ENCODE measurements at regions of chr2 and their contacts with region 1.

Region 1: GRCh38 chr2:24792874-24793760 is at the starts of genes CENPO and PTRHD1:
- DNase-seq: peak; percentile 97
- ATAC-seq: peak; percentile 98
- H3K4me3 Mint-ChIP-seq: peak within 1 kb of the TSS; percentile 97
- H3K27ac Mint-ChIP-seq: peak within 1 kb of the TSS; percentile 100
- H3K4me1 Mint-ChIP-seq: peaks cover 30% of the 10 kb centered on the region
- H3K27me3 Mint-ChIP-seq: no peaks in the 10 kb centered on the region
- total RNA-seq, gene CENPO: 42.4 to 42.7 TPM
- total RNA-seq, gene PTRHD1: 22.3 to 26.5 TPM

Region 2: GRCh38 chr2:23926750-23927571 is 866.2 kb before region 1 on chr2 and contains the start of gene ATAD2B:
- CTCF ChIA-PET with region 1: no interaction called
- POLR2A ChIA-PET with region 1: no interaction called
- intact Hi-C with region 1: loop called in 1 of 2 experiments (anchors 2 kb)
- DNase-seq: peak; percentile 96
- ATAC-seq: peak; percentile 80
- H3K4me3 Mint-ChIP-seq: peak within 1 kb of the TSS; percentile 80
- H3K27ac Mint-ChIP-seq: peak within 1 kb of the TSS; percentile 100
- H3K4me1 Mint-ChIP-seq: peaks cover 41% of the 10 kb centered on the region
- H3K27me3 Mint-ChIP-seq: no peaks in the 10 kb centered on the region
- total RNA-seq, gene ATAD2B: 10.9 to 12.7 TPM

Region 3: DNA sequence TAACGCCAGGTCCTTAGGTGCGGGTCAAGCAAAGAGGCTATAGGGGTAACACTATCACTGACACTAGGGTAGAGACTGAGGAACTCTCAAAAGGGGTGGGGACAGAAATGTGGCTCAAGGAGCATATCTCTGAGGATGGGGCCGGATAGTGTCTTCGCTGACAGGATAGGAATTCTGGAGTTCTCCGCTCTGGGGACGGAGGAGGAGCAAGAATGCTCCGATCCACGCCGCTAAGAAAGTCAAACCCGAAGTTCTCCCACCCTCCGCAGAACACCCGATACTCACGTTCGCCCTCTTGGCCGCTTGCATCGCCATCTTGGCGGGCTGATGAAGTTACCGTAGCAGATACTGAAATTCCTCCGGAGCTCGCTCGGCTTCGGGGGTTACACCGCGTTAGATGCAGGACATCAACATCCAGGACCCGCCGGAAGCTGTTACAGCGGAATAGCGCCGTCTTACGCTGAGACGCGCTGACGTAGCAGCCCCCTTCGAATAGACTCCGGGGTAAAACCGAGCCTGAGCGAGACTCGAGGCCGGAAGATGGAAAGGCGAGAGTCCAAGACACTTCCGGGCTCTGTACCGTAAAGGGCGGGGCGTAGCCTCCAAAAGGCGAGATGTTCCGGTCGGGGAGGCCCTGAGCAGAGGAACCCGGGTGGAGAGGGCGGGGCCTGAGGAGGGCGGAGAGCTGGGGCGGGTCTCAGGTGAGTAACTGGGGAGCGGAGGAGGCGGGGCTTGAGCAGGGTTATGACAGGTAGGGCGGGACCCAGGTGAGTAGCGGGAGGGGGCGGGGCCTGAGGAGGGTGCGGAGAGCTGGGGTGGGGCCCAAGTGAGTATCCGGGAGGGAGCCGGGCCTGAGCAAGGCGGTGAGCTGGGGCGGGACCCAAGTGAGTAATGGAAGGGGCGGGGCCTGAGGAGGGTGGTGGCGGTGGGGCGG is 716.9 kb before region 1 on chr2 and contains the start of gene SF3B6:
- CTCF ChIA-PET with region 1: no interaction called
- POLR2A ChIA-PET with region 1: no interaction called
- intact Hi-C with region 1: loop called in 1 of 2 experiments (anchors 1 kb)
- DNase-seq: peak; percentile 100
- ATAC-seq: peak; percentile 91
- H3K4me3 Mint-ChIP-seq: peak within 1 kb of the TSS; percentile 99
- H3K27ac Mint-ChIP-seq: peak within 1 kb of the TSS; percentile 99
- H3K4me1 Mint-ChIP-seq: peaks cover 43% of the 10 kb centered on the region
- H3K27me3 Mint-ChIP-seq: no peaks in the 10 kb centered on the region
- total RNA-seq, gene SF3B6: 128 to 143 TPM

Region 4: DNA sequence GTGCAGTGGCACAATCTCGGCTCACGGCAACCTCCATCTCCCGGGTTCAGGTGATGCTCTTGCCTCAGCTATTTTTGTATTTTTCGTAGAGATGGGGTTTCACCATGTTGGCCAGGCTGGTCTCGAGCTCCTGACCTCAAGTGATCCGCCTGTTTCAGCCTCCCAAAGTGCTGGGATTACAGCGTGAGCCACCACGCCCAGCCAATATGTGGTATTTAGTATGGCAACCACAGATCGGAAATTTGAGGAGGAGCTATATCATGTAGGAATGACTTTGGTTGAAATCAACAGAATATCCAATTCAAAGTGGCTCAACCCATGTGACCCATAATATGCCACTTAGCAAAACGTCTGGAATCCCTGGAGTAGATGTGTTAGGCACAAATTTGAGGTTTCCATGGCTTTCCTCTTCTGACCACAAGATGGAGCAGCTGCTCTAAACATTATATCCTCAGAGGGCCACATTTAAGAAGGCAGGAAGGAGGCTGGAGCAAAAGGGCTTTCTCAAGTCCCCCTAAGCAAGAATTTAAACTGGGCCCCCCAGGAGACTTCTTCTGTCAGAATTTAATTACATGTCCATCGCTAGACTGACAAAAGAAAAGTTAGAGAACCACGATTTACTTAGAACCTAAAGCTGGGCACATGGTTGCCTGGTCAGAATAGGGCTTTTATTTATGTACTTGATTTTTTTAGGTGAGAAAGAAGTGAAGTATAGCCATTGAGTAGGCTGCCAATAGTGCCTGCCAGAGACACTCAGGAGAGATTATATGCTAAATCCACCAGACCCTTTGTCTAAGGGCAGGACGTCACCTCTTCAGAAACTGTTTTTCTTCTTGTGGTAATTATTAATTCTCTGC is 383.2 kb before region 1 on chr2:
- CTCF ChIA-PET with region 1: interaction called, 20 read pairs
- POLR2A ChIA-PET with region 1: no interaction called
- intact Hi-C with region 1: no loop called
- DNase-seq: peak; percentile 37
- ATAC-seq: peak; percentile 86
- H3K4me3 Mint-ChIP-seq: no peak overlapping the region
- H3K27ac Mint-ChIP-seq: no peak overlapping the region
- H3K4me1 Mint-ChIP-seq: no peaks in the 10 kb centered on the region
- H3K27me3 Mint-ChIP-seq: peaks cover 7% of the 10 kb centered on the region

Region 5: DNA sequence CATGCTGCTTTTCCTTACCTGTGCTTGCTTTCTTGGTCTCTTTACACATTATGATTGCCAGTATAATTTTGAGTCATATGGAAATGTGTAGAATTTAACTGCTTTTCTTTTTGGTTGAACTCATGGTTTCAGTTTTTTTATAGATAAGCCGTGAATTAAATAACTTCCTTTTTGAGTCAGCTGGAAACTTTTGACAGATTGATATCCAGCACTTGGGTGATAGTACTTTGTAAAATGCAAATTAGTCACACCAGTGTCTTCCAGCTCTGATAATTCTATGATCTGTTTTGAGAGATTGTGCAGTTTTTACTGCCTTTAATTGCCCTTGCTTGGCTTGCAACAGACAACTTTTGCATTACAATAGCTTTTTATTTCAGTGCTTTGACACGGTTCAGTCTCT is 215.6 kb before region 1 on chr2:
- CTCF ChIA-PET with region 1: interaction called, 4 read pairs
- POLR2A ChIA-PET with region 1: no interaction called
- intact Hi-C with region 1: loop called in 1 of 2 experiments (anchors 1 kb)
- DNase-seq: no peak
- ATAC-seq: peak; percentile 76
- H3K4me3 Mint-ChIP-seq: peak overlapping the region; percentile 3
- H3K27ac Mint-ChIP-seq: peak overlapping the region; percentile 79
- H3K4me1 Mint-ChIP-seq: peaks cover 76% of the 10 kb centered on the region
- H3K27me3 Mint-ChIP-seq: no peaks in the 10 kb centered on the region

Region 6: GRCh38 chr2:24702800-24703199 is 90.3 kb before region 1 on chr2:
- CTCF ChIA-PET with region 1: no interaction called
- POLR2A ChIA-PET with region 1: no interaction called
- intact Hi-C with region 1: no loop called
- DNase-seq: no peak
- ATAC-seq: peak; percentile 77
- H3K4me3 Mint-ChIP-seq: no peak overlapping the region
- H3K27ac Mint-ChIP-seq: peak overlapping the region; percentile 59
- H3K4me1 Mint-ChIP-seq: peaks cover 13% of the 10 kb centered on the region
- H3K27me3 Mint-ChIP-seq: no peaks in the 10 kb centered on the region

Region 7: GRCh38 chr2:24920098-24920808 is 127.1 kb after region 1 on chr2 and contains the start of gene ADCY3:
- CTCF ChIA-PET with region 1: interaction called, 3 read pairs
- POLR2A ChIA-PET with region 1: interaction called, 3 read pairs
- intact Hi-C with region 1: loop called in 1 of 2 experiments (anchors 1 kb)
- DNase-seq: peak; percentile 79
- ATAC-seq: peak; percentile 59
- H3K4me3 Mint-ChIP-seq: peak within 1 kb of the TSS; percentile 83
- H3K27ac Mint-ChIP-seq: peak within 1 kb of the TSS; percentile 90
- H3K4me1 Mint-ChIP-seq: peaks cover 33% of the 10 kb centered on the region
- H3K27me3 Mint-ChIP-seq: peaks cover 1% of the 10 kb centered on the region
- total RNA-seq, gene ADCY3: 59.5 to 92.8 TPM

Region 8: DNA sequence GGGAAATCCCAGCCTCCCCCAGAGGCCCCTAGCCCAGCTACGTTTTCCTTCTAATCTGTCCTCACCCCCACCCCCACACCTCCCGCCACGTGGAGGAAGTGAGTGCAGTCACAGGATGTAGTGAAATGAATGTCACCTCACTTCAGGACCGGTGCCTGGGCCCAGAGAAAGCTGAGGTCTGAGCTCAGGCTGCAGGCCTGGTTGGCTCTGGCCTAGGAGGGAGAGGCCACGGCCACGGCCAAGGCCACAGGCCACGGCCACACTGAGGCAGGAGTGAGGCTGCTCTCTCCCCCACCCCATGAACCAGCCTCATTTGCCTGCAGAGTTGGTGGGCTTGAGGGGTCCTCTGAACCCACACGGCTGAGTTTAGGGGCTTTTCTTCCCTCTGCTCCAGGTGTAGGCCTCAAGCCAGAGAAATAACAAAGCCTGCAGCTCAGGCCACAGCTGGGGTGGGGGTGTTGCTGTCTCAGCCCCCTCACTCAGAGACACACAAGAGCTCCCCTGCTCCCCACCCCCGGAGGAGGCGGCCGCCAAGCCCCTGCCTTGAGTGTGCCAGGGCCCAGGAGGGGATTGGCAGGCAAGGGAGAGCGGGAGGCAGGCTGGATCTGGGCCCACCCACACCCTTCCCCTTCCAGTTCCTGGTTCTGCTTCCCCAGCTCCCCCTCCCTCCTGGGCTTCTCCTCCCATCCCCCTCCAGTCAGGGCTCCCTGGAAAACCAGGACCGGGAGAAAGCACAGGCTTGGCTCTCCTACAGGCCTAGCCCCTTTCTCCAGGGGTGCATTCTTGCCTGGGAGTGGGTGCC is 521.6 kb after region 1 on chr2:
- CTCF ChIA-PET with region 1: no interaction called
- POLR2A ChIA-PET with region 1: no interaction called
- intact Hi-C with region 1: loop called in 1 of 2 experiments (anchors 2 kb)
- DNase-seq: peak; percentile 97
- ATAC-seq: peak; percentile 88
- H3K4me3 Mint-ChIP-seq: peak overlapping the region; percentile 83
- H3K27ac Mint-ChIP-seq: peak overlapping the region; percentile 95
- H3K4me1 Mint-ChIP-seq: peaks cover 58% of the 10 kb centered on the region
- H3K27me3 Mint-ChIP-seq: no peaks in the 10 kb centered on the region